Activated CD8-positive, alpha-beta T cell treated with anti-CD3 and anti-CD28 coated beads for 36 hours (primary cell): ENCODE measurements at regions of chr1 and their contacts with region 1.

Region 1: DNA sequence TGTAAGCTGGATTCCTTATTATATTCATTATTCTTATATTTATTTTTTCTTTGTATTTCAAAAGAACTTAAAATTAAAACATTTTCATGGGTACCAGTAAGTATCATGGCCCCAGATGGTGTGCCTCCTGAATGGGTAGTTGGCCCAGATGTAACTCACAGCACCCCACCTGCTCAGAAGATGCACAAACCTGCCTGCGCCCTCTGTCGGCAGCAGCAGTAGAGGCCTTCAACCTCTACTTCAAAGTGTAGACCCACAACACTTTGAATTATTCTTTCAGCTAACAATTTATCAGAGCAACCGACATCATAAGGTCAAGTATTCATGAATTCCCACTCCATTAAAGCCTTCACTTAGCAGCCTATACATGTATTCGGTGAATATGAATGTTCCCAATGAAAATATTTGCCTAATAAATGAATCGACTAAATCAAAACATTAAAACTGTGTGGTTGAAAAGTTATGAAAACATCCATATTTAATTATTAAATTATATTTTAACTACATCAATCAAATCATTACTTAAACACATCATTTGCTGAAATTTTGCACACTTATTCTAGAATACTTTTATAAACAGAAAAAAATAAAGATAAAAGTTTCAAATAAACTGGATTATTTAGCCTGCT is 25.4 kb downstream of the PIGM start:
- DNase-seq: peak; percentile 87
- ATAC-seq: peak; percentile 94
- H3K4me3 Mint-ChIP-seq: no peak overlapping the region
- H3K27ac Mint-ChIP-seq: no peak overlapping the region
- H3K4me1 Mint-ChIP-seq: no peaks in the 10 kb centered on the region
- H3K27me3 Mint-ChIP-seq: peaks cover 2% of the 10 kb centered on the region
- CTCF ChIP-seq: peak; percentile 85

Region 2: GRCh38 chr1:159891275-159892157 is 114.9 kb before region 1 on chr1:
- CTCF ChIA-PET with region 1: interaction called, 123 read pairs
- POLR2A ChIA-PET with region 1: no interaction called
- intact Hi-C with region 1: no loop called
- DNase-seq: peak; percentile 87
- ATAC-seq: peak; percentile 98
- H3K4me3 Mint-ChIP-seq: no peak overlapping the region
- H3K27ac Mint-ChIP-seq: no peak overlapping the region
- H3K4me1 Mint-ChIP-seq: peaks cover 14% of the 10 kb centered on the region
- H3K27me3 Mint-ChIP-seq: no peaks in the 10 kb centered on the region
- CTCF ChIP-seq: peak; percentile 99

Region 3: DNA sequence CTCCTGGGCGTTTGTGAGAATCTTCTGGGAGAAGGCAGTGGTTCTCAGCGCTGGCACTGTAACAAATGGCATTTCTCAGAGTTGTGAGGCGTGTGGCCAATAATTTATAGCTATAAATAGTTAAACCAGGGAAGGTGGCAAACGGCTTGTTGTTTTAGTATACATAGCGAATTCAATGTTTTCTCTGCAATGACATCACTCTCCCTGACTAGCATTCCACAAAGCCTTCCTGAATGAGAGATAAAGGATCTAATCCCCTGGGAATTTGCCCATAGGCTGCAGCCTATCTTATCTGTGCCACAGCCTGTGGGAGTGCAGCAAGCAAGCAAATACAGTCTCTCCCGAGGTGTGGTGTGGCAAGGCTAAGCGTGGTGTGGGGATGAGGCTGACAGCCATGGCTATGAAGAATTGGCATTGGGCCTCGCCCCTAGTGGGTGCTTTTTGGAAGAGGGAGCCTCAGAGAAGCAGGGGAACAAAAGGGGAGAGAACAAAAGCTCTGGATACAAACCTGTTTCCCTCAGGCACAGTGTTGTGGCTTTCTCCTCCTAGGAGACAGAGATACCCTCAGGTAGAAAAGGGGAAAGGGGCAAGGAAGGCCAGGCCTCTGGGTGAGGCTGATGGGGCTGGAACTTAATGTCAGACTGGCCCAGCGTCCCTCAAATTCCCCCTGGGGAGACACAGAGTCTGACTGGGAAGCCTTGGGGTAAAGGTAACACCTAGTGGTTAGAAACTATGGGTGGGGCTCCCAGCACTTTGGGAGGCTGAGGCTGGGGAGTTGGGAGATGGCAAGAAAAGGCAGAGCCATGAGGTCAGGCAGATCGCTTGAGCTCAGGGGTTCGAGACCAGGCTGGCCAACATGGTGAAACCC is 90.0 kb before region 1 on chr1:
- CTCF ChIA-PET with region 1: interaction called, 374 read pairs
- POLR2A ChIA-PET with region 1: no interaction called
- intact Hi-C with region 1: no loop called
- DNase-seq: no peak
- ATAC-seq: no peak
- H3K4me3 Mint-ChIP-seq: no peak overlapping the region
- H3K27ac Mint-ChIP-seq: peak overlapping the region; percentile 7
- H3K4me1 Mint-ChIP-seq: peaks cover 66% of the 10 kb centered on the region
- H3K27me3 Mint-ChIP-seq: no peaks in the 10 kb centered on the region
- CTCF ChIP-seq: no peak

Region 4: GRCh38 chr1:159945483-159946241 is 60.8 kb before region 1 on chr1 and contains the start of gene IGSF9:
- CTCF ChIA-PET with region 1: interaction called, 374 read pairs
- POLR2A ChIA-PET with region 1: no interaction called
- intact Hi-C with region 1: no loop called
- DNase-seq: peak; percentile 86
- ATAC-seq: peak; percentile 99
- H3K4me3 Mint-ChIP-seq: peak within 1 kb of the TSS; percentile 48
- H3K27ac Mint-ChIP-seq: no peak within 1 kb of the TSS
- H3K4me1 Mint-ChIP-seq: peaks cover 2% of the 10 kb centered on the region
- H3K27me3 Mint-ChIP-seq: peaks cover 22% of the 10 kb centered on the region
- CTCF ChIP-seq: peak; percentile 57
- total RNA-seq, gene IGSF9: 0.07 TPM in 1 of 2 experiments, not detected in the other

Region 5: DNA sequence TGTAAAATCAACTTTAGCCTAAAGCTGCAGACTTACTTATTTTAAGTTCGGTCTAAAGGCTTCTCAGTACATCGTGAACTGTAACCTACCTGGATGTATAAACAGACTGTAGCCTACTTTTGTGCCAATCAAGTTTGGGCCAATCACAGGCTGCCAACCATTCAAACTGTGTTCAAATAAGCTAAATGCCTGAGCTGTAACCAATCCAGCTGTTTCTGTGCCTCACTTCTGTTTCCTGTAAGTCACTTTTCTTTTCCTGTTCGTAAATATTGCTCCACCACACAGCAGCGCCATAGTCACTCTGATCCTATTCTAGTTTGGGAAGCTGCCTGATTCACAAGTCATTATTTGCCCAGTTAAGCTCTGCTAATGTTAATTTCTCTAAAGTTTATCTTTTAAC is 14.9 kb before region 1 on chr1:
- CTCF ChIA-PET with region 1: interaction called, 143 read pairs
- POLR2A ChIA-PET with region 1: no interaction called
- intact Hi-C with region 1: no loop called
- DNase-seq: peak; percentile 40
- ATAC-seq: peak; percentile 58
- H3K4me3 Mint-ChIP-seq: no peak overlapping the region
- H3K27ac Mint-ChIP-seq: no peak overlapping the region
- H3K4me1 Mint-ChIP-seq: peaks cover 6% of the 10 kb centered on the region
- H3K27me3 Mint-ChIP-seq: peaks cover 6% of the 10 kb centered on the region
- CTCF ChIP-seq: no peak

Region 6: GRCh38 chr1:160046494-160047110 is 40.2 kb after region 1 on chr1:
- CTCF ChIA-PET with region 1: interaction called, 41 read pairs
- POLR2A ChIA-PET with region 1: no interaction called
- intact Hi-C with region 1: no loop called
- DNase-seq: peak; percentile 54
- ATAC-seq: peak; percentile 87
- H3K4me3 Mint-ChIP-seq: peak overlapping the region; percentile 70
- H3K27ac Mint-ChIP-seq: peak overlapping the region; percentile 81
- H3K4me1 Mint-ChIP-seq: peaks cover 12% of the 10 kb centered on the region
- H3K27me3 Mint-ChIP-seq: peaks cover 12% of the 10 kb centered on the region
- CTCF ChIP-seq: peak; percentile 91

Region 7: GRCh38 chr1:160221089-160221488 is 214.7 kb after region 1 on chr1:
- CTCF ChIA-PET with region 1: no interaction called
- POLR2A ChIA-PET with region 1: no interaction called
- intact Hi-C with region 1: no loop called
- DNase-seq: no peak
- ATAC-seq: no peak
- H3K4me3 Mint-ChIP-seq: no peak overlapping the region
- H3K27ac Mint-ChIP-seq: no peak overlapping the region
- H3K4me1 Mint-ChIP-seq: no peaks in the 10 kb centered on the region
- H3K27me3 Mint-ChIP-seq: no peaks in the 10 kb centered on the region
- CTCF ChIP-seq: no peak